ENCODE measurements at regions of chr1 and their contacts with region 1.

Region 1: DNA sequence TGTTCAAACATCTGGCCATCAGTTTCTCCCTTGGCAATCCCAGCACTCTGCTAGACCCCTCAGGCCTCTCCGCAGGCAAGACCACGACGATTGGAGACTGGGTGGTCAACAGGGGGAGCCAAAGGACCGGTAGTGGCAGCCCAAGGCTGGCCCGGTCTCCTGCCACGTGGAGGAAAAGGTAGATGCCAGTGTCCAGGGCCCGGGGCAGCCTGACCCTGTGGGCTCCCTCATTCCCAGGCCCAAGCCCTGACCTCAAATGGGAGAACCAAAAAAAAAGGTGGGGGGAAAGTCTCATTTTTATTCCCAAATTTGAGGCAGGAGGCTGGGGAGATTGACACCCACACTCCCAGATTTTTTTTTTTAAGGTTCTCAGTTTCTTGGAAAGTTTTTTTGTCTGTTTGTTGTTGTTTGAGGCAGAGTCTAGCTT is 24.8 kb downstream of the S100A6 start:
- DNase-seq: peak; percentile 90
- H3K4me3 Mint-ChIP-seq: no peak overlapping the region
- H3K27ac Mint-ChIP-seq: peak overlapping the region; percentile 36
- H3K4me1 Mint-ChIP-seq: peaks cover 8% of the 10 kb centered on the region
- H3K27me3 Mint-ChIP-seq: no peaks in the 10 kb centered on the region

Region 2: GRCh38 chr1:153532769-153533599 is 22.0 kb after region 1 on chr1:
- CTCF ChIA-PET with region 1: interaction called, 71 read pairs
- intact Hi-C with region 1: loop called (anchors 1 kb)
- DNase-seq: peak; percentile 90
- H3K4me3 Mint-ChIP-seq: peak overlapping the region; percentile 51
- H3K27ac Mint-ChIP-seq: peak overlapping the region; percentile 96
- H3K4me1 Mint-ChIP-seq: peaks cover 54% of the 10 kb centered on the region
- H3K27me3 Mint-ChIP-seq: no peaks in the 10 kb centered on the region

Region 3: DNA sequence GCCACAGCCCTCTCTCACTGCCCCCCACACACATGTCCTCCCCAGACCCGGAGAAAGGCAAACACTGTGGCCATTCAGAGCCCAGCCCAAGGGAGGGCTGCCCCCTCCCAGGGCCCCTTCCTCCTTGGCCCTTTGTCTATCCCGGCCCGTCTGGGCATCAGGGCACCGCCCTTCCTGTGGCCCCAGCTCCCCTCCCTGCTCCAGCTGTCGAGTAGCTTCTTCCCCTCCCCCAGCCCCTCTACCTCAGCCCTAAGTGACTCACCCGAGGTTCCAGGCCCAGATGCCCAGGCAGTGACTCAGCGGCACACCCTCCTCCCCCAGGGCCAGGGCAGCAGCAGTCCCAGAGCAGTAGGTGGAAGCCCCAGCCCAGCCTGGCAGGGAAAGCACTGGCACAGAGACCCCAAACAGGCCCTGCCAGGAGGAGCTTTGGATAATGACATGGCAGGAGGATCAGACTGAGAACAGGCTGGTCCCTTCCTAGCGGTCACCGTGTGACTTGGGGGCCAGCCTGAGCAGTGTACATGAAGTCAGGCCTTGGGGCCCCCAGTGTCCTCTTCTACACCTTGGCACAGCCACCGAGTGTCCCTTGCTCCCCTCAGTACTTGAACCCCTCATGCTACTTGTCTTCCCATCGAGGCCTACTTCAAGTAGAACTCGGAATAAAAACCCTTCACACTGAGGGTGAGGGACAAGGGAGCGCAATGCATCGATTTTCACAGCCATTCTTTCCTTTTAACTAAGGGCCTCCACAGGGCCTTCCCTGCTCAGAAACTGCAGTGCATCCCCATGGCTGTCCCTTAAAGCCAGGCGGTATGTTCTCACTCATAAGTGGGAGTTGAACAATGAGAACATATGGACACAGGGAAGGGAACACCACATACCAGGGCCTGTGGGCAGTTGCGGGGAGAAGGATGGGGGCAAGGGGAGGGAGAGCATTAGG is 55.7 kb after region 1 on chr1:
- CTCF ChIA-PET with region 1: interaction called, 153 read pairs
- intact Hi-C with region 1: loop called (anchors 1 kb)
- DNase-seq: peak; percentile 96
- H3K4me3 Mint-ChIP-seq: peak overlapping the region; percentile 32
- H3K27ac Mint-ChIP-seq: peak overlapping the region; percentile 86
- H3K4me1 Mint-ChIP-seq: peaks cover 44% of the 10 kb centered on the region
- H3K27me3 Mint-ChIP-seq: no peaks in the 10 kb centered on the region

Region 4: GRCh38 chr1:153633716-153634665 is 123.0 kb after region 1 on chr1 and contains the start of gene CHTOP:
- CTCF ChIA-PET with region 1: interaction called, 6 read pairs
- intact Hi-C with region 1: loop called (anchors 2 kb)
- DNase-seq: peak; percentile 98
- H3K4me3 Mint-ChIP-seq: peak within 1 kb of the TSS; percentile 90
- H3K27ac Mint-ChIP-seq: peak within 1 kb of the TSS; percentile 100
- H3K4me1 Mint-ChIP-seq: peaks cover 45% of the 10 kb centered on the region
- H3K27me3 Mint-ChIP-seq: no peaks in the 10 kb centered on the region
- total RNA-seq, gene CHTOP: 88.2 to 91.3 TPM

Region 5: GRCh38 chr1:153946622-153947241 is 435.7 kb after region 1 on chr1 and contains the start of gene DENND4B:
- CTCF ChIA-PET with region 1: no interaction called
- intact Hi-C with region 1: loop called (anchors 1 kb)
- DNase-seq: peak; percentile 71
- H3K4me3 Mint-ChIP-seq: peak within 1 kb of the TSS; percentile 92
- H3K27ac Mint-ChIP-seq: peak within 1 kb of the TSS; percentile 95
- H3K4me1 Mint-ChIP-seq: peaks cover 21% of the 10 kb centered on the region
- H3K27me3 Mint-ChIP-seq: no peaks in the 10 kb centered on the region
- total RNA-seq, gene DENND4B: 124 to 130 TPM

Measured in activated naive CD4-positive, alpha-beta T cell treated with anti-CD3 and anti-CD28 coated beads for 36 hours (primary cell).